Heart right ventricle (tissue), 16 donors: ENCODE measurements at regions of chr22 and their contacts with region 1.

Region 1: GRCh38 chr22:40636380-40637182 is at the start of gene MRTFA:
- DNase-seq: peak; percentile 100
- ATAC-seq: peak; percentile 96 to 98 (median 98)
- H3K4me3 ChIP-seq: peak within 1 kb of the TSS; percentile 65 to 99 (median 93)
- H3K27ac ChIP-seq: peak within 1 kb of the TSS; percentile 83 to 94 (median 92)
- H3K4me1 ChIP-seq: peaks cover 3 to 52% (median 33%) of the 10 kb centered on the region in 9 donors
- H3K27me3 ChIP-seq: no peaks in the 10 kb centered on the region
- CTCF ChIP-seq: peak in 1 of 9 donors; percentile 19
- total RNA-seq, gene MRTFA: 13.2 to 30.9 (median 18.5) TPM

Region 2: GRCh38 chr22:40363059-40363458 is 273.5 kb before region 1 on chr22:
- intact Hi-C with region 1: loop called in 1 of 10 experiments (anchors 10 kb)
- DNase-seq: no peak
- ATAC-seq: no peak
- H3K4me3 ChIP-seq: no peak overlapping the region
- H3K27ac ChIP-seq: no peak overlapping the region
- H3K4me1 ChIP-seq: peaks cover 0 to 4% (median 0%) of the 10 kb centered on the region in 9 donors
- H3K27me3 ChIP-seq: no peaks in the 10 kb centered on the region
- CTCF ChIP-seq: no peak

Region 3: GRCh38 chr22:40519284-40519947 is 117.2 kb before region 1 on chr22:
- intact Hi-C with region 1: loop called in 5 of 10 experiments (anchors 5 to 10 kb)
- DNase-seq: no peak
- ATAC-seq: no peak
- H3K4me3 ChIP-seq: no peak overlapping the region
- H3K27ac ChIP-seq: peak overlapping the region in 1 of 10 donors; percentile 74
- H3K4me1 ChIP-seq: peaks cover 0 to 20% (median 0%) of the 10 kb centered on the region in 9 donors
- H3K27me3 ChIP-seq: no peaks in the 10 kb centered on the region
- CTCF ChIP-seq: no peak

Region 4: GRCh38 chr22:40525249-40525884 is 111.2 kb before region 1 on chr22:
- intact Hi-C with region 1: loop called in 6 of 10 experiments (anchors 5 to 10 kb)
- DNase-seq: peak; percentile 31 to 50
- ATAC-seq: peak in 2 of 8 donors; percentile 49
- H3K4me3 ChIP-seq: no peak overlapping the region
- H3K27ac ChIP-seq: no peak overlapping the region
- H3K4me1 ChIP-seq: peaks cover 0 to 29% (median 0%) of the 10 kb centered on the region in 9 donors
- H3K27me3 ChIP-seq: no peaks in the 10 kb centered on the region
- CTCF ChIP-seq: peak; percentile 52 to 84 (median 71)

Region 5: DNA sequence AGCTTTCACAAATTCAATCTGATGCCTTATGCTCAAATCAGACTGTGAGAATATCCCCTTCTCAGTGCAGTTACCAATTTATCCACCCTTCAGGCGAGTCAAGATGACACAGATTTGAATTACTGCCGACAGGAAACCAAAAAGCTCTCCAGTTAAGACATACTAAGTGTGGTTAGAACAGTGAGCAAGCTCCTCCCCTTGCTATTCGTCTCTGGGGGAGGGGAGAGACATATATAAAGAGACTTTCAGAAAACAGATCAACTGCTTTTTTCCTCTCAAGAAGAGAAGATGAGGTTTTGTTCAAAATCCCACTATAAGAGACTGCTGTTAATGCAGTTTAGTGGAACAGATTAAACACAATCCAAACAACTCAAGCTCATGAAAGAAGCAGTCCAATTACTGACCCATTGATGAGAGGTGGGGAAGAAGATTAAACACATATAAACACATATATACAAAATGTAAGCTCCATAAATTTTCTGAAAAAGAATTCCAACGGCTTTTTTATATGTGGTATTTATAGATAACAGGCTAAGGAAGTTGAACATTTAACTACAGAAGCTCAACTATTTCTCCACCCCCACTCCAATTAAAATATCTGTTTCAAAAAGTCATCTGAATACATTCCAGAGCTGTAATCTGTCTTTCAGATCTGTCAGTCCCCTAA is 102.7 kb before region 1 on chr22:
- intact Hi-C with region 1: loop called in 6 of 10 experiments (anchors 5 to 10 kb)
- DNase-seq: no peak
- ATAC-seq: peak; percentile 57 to 85 (median 76)
- H3K4me3 ChIP-seq: peak overlapping the region in 8 of 10 donors; percentile 4 to 41 (median 30)
- H3K27ac ChIP-seq: peak overlapping the region; percentile 5 to 64 (median 39)
- H3K4me1 ChIP-seq: peaks cover 11 to 60% (median 44%) of the 10 kb centered on the region in 9 donors
- H3K27me3 ChIP-seq: no peaks in the 10 kb centered on the region
- CTCF ChIP-seq: no peak

Region 6: DNA sequence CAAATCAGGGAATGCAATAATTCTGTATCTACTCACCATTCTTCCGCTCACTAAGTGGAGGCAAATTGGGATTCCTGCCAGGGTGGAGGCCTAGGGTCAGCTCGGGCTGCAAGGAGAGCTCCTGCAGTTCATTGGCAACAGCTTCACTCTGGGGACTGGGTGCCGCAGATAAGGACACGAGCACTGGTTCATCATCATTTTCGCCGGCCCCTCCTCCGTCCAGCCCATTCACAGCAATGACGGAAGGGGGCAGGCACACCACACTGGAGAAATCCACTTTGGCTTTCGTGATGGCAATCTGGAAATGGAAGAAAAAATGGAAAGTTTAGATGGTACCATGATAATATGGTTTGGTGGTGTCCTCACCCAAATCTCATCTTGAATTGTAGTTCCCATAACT is 84.5 kb before region 1 on chr22:
- intact Hi-C with region 1: loop called in 2 of 10 experiments (anchors 10 kb)
- DNase-seq: peak; percentile 75 to 78
- ATAC-seq: peak; percentile 73 to 96 (median 87)
- H3K4me3 ChIP-seq: no peak overlapping the region
- H3K27ac ChIP-seq: no peak overlapping the region
- H3K4me1 ChIP-seq: peaks cover 0 to 21% (median 10%) of the 10 kb centered on the region in 9 donors
- H3K27me3 ChIP-seq: no peaks in the 10 kb centered on the region
- CTCF ChIP-seq: peak; percentile 12 to 67 (median 39)

Region 7: DNA sequence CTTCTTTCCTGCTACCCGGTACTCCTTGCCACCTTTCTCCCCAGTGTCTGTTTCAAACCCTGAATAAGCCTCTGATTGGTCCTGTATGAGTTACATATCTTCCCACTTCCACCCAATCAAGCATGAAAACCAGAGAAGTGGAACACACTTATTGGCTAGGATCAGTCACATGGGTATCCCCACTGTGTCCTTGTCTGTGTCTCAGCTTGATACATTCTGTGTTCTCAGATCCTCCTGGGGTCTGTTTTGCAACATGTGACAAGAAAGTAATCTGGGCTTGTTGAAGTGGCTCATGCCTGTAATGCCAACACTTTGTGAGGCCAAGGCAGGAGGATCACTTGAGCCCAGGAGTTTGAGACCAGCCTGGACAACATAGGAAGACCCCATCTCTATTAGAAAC is 66.6 kb after region 1 on chr22:
- intact Hi-C with region 1: no loop called
- DNase-seq: no peak
- ATAC-seq: peak in 1 of 8 donors; percentile 25
- H3K4me3 ChIP-seq: no peak overlapping the region
- H3K27ac ChIP-seq: no peak overlapping the region
- H3K4me1 ChIP-seq: no peaks in the 10 kb centered on the region
- H3K27me3 ChIP-seq: no peaks in the 10 kb centered on the region
- CTCF ChIP-seq: no peak